ENCODE measurements at regions of chr12 and their contacts with region 1.

Region 1: DNA sequence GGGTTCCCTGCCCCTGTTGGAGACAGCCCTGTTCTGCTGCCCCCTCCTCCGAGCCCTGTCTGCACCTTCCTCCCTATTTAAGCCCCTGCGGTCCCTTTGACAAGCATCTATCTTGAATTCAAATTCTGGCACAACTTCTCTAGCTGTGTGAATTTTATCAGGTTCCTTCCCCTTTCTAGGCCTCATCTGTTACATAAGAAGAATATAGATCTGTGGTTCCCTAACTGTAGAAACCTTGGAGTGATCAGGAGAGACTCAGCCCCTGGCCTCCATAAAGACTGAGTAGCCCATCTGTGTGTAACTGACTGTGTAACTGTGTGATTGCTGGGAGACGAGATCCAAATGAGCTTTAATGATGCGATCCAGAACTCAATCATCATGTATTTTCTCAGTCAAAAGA is 13.0 kb upstream of the RACGAP1 start:
- DNase-seq: no peak
- ATAC-seq: no peak
- H3K4me3 Mint-ChIP-seq: no peak overlapping the region
- H3K27ac Mint-ChIP-seq: no peak overlapping the region
- H3K4me1 Mint-ChIP-seq: peaks cover 4% of the 10 kb centered on the region
- H3K27me3 Mint-ChIP-seq: peaks cover 15% of the 10 kb centered on the region

Region 2: DNA sequence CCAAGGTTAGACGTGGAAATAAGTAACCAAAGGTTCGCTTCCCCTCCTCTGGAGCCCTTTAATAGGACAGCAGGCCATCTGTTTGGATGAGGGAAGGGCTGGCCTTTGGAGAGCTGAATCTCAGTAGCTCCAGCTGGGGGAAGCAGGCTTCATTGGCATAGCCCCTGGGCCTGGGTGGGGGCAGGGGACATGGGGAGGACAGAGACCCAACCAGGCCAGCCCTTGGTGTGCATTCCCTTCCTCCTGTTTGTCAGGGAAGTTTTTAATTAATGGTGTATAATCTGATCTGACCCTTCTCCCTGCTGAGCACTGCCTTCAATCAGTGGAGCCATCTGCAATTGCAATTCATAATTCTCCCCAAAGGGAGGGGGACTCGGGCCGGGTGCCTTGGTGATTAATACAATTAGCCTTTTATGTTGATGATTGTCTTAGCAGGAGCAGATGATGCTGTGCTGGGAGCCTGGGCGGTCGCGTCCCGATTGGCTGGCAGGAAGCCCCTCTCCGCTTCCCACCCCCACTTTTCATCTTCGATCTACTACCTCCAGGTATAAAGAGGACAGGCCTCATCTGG is 59.2 kb before region 1 on chr12:
- CTCF ChIA-PET with region 1: no interaction called
- DNase-seq: no peak
- ATAC-seq: no peak
- H3K4me3 Mint-ChIP-seq: no peak overlapping the region
- H3K27ac Mint-ChIP-seq: no peak overlapping the region
- H3K4me1 Mint-ChIP-seq: no peaks in the 10 kb centered on the region
- H3K27me3 Mint-ChIP-seq: no peaks in the 10 kb centered on the region

Region 3: GRCh38 chr12:50016501-50017475 is 21.5 kb before region 1 on chr12:
- CTCF ChIA-PET with region 1: interaction called, 11 read pairs
- DNase-seq: no peak
- ATAC-seq: no peak
- H3K4me3 Mint-ChIP-seq: no peak overlapping the region
- H3K27ac Mint-ChIP-seq: no peak overlapping the region
- H3K4me1 Mint-ChIP-seq: peaks cover 36% of the 10 kb centered on the region
- H3K27me3 Mint-ChIP-seq: no peaks in the 10 kb centered on the region

Region 4: DNA sequence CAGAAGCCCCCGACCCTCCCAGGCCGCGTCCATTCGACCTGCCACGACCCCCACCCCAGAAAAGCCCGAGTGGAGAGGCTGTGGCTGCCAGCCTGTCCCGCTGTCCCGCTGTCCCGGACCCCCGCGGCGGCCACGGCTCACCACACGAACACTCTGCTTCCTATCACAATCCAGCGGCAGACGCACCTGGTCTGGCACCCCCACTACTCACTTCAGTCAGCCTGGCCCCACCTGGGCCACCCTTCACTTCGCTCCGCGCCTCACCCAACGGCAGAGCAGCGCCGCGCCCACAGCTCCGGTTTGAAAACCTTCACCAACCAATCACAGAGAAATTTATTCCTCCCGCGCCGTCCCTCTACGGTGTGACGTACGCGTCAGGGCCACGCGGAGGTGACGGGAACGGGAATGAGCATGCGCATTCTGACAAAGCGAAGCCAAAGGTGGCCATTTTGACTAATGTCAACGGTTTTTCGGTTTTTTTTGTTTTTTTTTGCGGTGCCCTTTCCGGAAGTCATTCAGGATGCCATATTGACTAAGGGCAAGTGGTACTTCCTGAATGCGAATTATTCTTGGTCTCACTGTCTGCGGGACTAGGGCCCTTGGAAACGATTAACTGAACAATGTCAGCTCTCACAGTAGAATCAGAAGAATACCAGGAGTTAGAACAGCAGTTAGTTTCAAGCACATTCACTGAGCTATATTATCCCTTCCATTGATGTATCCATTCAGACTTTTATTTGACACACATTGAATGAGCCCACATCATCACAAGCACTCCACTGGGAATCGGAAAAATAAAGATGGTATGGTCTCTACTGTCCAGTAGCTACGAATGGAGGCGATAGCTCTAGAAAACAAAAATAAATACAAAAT is 12.9 kb before region 1 on chr12 and contains the start of gene RACGAP1:
- CTCF ChIA-PET with region 1: interaction called, 44 read pairs
- DNase-seq: peak; percentile 99
- ATAC-seq: peak; percentile 98
- H3K4me3 Mint-ChIP-seq: peak within 1 kb of the TSS; percentile 91
- H3K27ac Mint-ChIP-seq: peak within 1 kb of the TSS; percentile 96
- H3K4me1 Mint-ChIP-seq: peaks cover 38% of the 10 kb centered on the region
- H3K27me3 Mint-ChIP-seq: no peaks in the 10 kb centered on the region
- total RNA-seq, gene RACGAP1: 180 to 198 TPM

Region 5: DNA sequence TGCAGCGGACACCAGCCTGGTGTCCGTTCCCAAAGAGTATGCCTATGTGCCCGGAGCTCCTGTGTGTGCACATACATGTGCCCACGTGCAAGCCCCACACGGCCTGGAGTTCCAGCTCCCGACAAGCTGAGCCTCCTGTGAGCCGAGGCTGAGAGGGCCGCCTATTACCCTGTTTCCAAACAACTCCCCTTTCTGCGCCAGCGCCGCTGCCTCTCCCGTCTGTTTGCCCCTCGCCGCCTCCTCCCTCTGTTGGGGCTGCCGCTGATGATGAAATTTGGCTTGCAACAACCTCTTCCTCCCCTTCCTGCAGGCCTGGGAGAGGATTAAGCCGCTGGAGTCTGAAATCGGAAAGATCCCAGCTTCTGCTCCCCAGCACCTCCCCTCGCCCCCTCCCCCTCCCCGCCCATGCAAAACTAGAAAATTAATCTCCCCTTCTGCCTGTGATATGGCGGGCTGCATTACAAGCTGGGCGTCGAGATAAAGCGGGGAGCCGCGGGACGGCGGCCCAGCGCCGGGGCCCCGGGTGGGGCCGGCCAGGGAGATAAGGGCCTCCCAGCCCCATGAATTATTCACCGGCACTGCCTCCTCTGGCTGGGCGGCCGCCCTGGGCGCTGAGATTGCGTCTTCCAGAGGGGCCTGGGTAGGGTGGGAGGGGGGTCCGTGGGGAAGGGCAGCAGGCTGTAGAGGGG is 12.2 kb after region 1 on chr12:
- CTCF ChIA-PET with region 1: interaction called, 124 read pairs
- DNase-seq: no peak
- ATAC-seq: no peak
- H3K4me3 Mint-ChIP-seq: no peak overlapping the region
- H3K27ac Mint-ChIP-seq: no peak overlapping the region
- H3K4me1 Mint-ChIP-seq: peaks cover 2% of the 10 kb centered on the region
- H3K27me3 Mint-ChIP-seq: peaks cover 47% of the 10 kb centered on the region

Region 6: GRCh38 chr12:50066433-50066832 is 28.1 kb after region 1 on chr12:
- CTCF ChIA-PET with region 1: interaction called, 221 read pairs
- DNase-seq: no peak
- ATAC-seq: no peak
- H3K4me3 Mint-ChIP-seq: no peak overlapping the region
- H3K27ac Mint-ChIP-seq: no peak overlapping the region
- H3K4me1 Mint-ChIP-seq: peaks cover 20% of the 10 kb centered on the region
- H3K27me3 Mint-ChIP-seq: no peaks in the 10 kb centered on the region

Region 7: GRCh38 chr12:50084775-50085614 is 46.7 kb after region 1 on chr12 and contains the start of gene SMARCD1:
- CTCF ChIA-PET with region 1: interaction called, 11 read pairs
- DNase-seq: peak; percentile 90
- ATAC-seq: peak; percentile 86
- H3K4me3 Mint-ChIP-seq: peak within 1 kb of the TSS; percentile 88
- H3K27ac Mint-ChIP-seq: peak within 1 kb of the TSS; percentile 95
- H3K4me1 Mint-ChIP-seq: peaks cover 38% of the 10 kb centered on the region
- H3K27me3 Mint-ChIP-seq: no peaks in the 10 kb centered on the region
- total RNA-seq, gene SMARCD1: 62.0 to 80.8 TPM